PC-9 (cell line): ENCODE measurements at regions of chr11 and their contacts with region 1.

Region 1: GRCh38 chr11:121112498-121113455 is 11.7 kb downstream of the TECTA start:
- DNase-seq: peak; percentile 21 to 52
- H3K4me3 ChIP-seq: no peak overlapping the region
- H3K27ac ChIP-seq: no peak overlapping the region
- H3K4me1 ChIP-seq: no peaks in the 10 kb centered on the region
- H3K27me3 ChIP-seq: peaks cover 83% of the 10 kb centered on the region
- CTCF ChIP-seq: peak; percentile 80

Region 2: DNA sequence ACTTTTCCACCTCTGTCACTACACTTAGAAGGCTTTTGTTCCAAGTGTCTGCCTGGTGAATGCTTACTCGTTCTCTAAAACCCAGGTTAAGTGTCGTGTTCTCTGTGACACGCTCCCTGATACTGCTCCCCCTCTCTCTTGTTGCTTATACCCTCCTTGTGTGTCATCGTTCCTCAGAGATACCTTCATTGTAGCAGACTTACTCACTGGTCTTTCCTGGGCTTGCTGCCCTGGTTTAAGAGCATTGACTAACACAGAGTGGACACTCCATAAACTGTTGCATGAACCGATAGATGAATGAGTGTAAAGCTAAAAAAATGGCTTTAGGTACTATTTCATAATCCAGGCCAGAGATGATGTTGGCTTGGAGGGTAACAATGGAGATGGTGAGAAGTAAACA is 429.9 kb before region 1 on chr11:
- CTCF ChIA-PET with region 1: no interaction called
- POLR2A ChIA-PET with region 1: no interaction called
- intact Hi-C with region 1: loop called (anchors 10 kb)
- DNase-seq: no peak
- H3K4me3 ChIP-seq: no peak overlapping the region
- H3K27ac ChIP-seq: no peak overlapping the region
- H3K4me1 ChIP-seq: no peaks in the 10 kb centered on the region
- H3K27me3 ChIP-seq: peaks cover 95% of the 10 kb centered on the region
- CTCF ChIP-seq: no peak

Region 3: GRCh38 chr11:121236115-121237001 is 123.6 kb after region 1 on chr11:
- CTCF ChIA-PET with region 1: no interaction called
- POLR2A ChIA-PET with region 1: no interaction called
- intact Hi-C with region 1: no loop called
- DNase-seq: no peak
- H3K4me3 ChIP-seq: no peak overlapping the region
- H3K27ac ChIP-seq: no peak overlapping the region
- H3K4me1 ChIP-seq: no peaks in the 10 kb centered on the region
- H3K27me3 ChIP-seq: peaks cover 93% of the 10 kb centered on the region
- CTCF ChIP-seq: no peak